Gastrocnemius medialis (tissue), 4 donors: ENCODE measurements at regions of chr10 and their contacts with region 1.

Region 1: GRCh38 chr10:68901104-68901927 is at the start of gene DDX50:
- DNase-seq: peak; percentile 98 to 99
- ATAC-seq: peak; percentile 99
- H3K4me3 ChIP-seq: peak within 1 kb of the TSS; percentile 92 to 98 (median 96)
- H3K27ac ChIP-seq: peak within 1 kb of the TSS; percentile 93 to 99 (median 98)
- H3K4me1 ChIP-seq: peaks cover 18 to 26% of the 10 kb centered on the region in 2 donors
- H3K27me3 ChIP-seq: no peaks in the 10 kb centered on the region
- CTCF ChIP-seq: peak in 4 of 5 experiments; percentile 13 to 37 (median 16)
- POLR2A ChIP-seq: peak; percentile 77 to 82
- total RNA-seq, gene DDX50: 17.2 to 25.9 (median 23.7) TPM

Region 2: GRCh38 chr10:68406815-68407548 is 494.3 kb before region 1 on chr10 and contains the start of gene RUFY2:
- in situ Hi-C with region 1: no loop called
- intact Hi-C with region 1: loop called (anchors 10 kb)
- DNase-seq: peak; percentile 32 to 58
- ATAC-seq: peak; percentile 92 to 96
- H3K4me3 ChIP-seq: peak within 1 kb of the TSS; percentile 83 to 100 (median 96)
- H3K27ac ChIP-seq: peak within 1 kb of the TSS; percentile 87 to 95 (median 92)
- H3K4me1 ChIP-seq: peaks cover 3 to 11% of the 10 kb centered on the region in 2 donors
- H3K27me3 ChIP-seq: no peaks in the 10 kb centered on the region
- CTCF ChIP-seq: peak; percentile 45 to 99 (median 95)
- POLR2A ChIP-seq: peak; percentile 60 to 69
- total RNA-seq, gene RUFY2: 8.9 to 15.7 (median 11.7) TPM

Region 3: GRCh38 chr10:68537796-68538195 is 363.5 kb before region 1 on chr10:
- in situ Hi-C with region 1: loop called (anchors 10 to 25 kb)
- intact Hi-C with region 1: no loop called
- DNase-seq: no peak
- ATAC-seq: no peak
- H3K4me3 ChIP-seq: no peak overlapping the region
- H3K27ac ChIP-seq: no peak overlapping the region
- H3K4me1 ChIP-seq: peaks cover 10 to 17% of the 10 kb centered on the region in 2 donors
- H3K27me3 ChIP-seq: no peaks in the 10 kb centered on the region
- CTCF ChIP-seq: no peak
- POLR2A ChIP-seq: no peak

Region 4: DNA sequence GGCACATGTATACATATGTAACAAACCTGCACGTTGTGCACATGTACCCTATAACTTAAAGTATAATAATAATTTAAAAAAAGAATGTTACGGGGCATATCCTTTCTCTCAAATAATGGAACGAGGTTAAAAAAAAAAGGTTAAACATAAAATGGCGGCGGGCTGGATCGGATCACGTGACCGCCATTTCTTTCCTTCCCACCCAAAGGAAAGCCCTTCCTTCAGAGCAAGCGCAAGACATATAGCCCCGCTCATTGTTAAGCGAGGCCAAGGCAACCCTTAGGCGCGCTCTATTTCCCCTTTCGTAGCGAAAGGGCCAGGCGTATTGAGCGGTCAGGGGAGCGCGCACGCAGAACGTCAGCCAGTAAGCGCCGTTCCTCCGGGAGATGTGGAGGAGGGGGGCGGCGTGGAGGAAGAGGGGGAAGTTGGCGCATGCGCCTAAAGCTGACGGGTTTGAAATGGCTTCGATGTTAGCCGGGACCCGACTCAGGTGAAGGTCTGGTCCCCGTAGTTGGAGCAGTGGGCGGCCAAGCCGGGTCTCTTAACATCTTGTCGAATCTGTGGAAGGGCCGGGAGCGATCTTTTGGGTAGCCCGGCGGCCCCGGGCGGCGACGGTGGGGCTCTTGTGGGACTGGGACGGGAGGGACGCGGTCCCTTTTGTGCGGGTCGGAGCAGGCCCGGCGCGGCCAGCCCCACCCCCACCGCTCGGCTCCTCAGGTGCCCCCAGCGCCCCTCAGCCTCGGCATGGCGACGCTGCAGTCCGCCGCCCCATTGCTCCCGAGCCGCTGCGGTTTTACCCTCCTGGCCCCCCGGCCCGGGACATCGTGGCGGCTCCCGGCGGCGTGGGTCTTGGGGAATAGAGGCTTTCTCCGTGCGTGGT is 180.3 kb before region 1 on chr10 and contains the start of gene CCAR1:
- in situ Hi-C with region 1: loop called in 1 of 4 experiments (anchors 25 kb)
- intact Hi-C with region 1: loop called (anchors 2 kb)
- DNase-seq: peak; percentile 93 to 95
- ATAC-seq: peak; percentile 97 to 98
- H3K4me3 ChIP-seq: peak within 1 kb of the TSS; percentile 88 to 96 (median 90)
- H3K27ac ChIP-seq: peak within 1 kb of the TSS; percentile 94 to 99 (median 96)
- H3K4me1 ChIP-seq: peaks cover 7 to 9% of the 10 kb centered on the region in 2 donors
- H3K27me3 ChIP-seq: no peaks in the 10 kb centered on the region
- CTCF ChIP-seq: no peak
- POLR2A ChIP-seq: peak; percentile 67 to 73
- total RNA-seq, gene CCAR1: 17.8 to 71.3 (median 37.7) TPM

Region 5: GRCh38 chr10:68756246-68756645 is 145.1 kb before region 1 on chr10:
- in situ Hi-C with region 1: no loop called
- intact Hi-C with region 1: no loop called
- DNase-seq: no peak
- ATAC-seq: no peak
- H3K4me3 ChIP-seq: no peak overlapping the region
- H3K27ac ChIP-seq: no peak overlapping the region
- H3K4me1 ChIP-seq: peaks cover 3 to 5% of the 10 kb centered on the region in 2 donors
- H3K27me3 ChIP-seq: no peaks in the 10 kb centered on the region
- CTCF ChIP-seq: no peak
- POLR2A ChIP-seq: no peak

Region 6: DNA sequence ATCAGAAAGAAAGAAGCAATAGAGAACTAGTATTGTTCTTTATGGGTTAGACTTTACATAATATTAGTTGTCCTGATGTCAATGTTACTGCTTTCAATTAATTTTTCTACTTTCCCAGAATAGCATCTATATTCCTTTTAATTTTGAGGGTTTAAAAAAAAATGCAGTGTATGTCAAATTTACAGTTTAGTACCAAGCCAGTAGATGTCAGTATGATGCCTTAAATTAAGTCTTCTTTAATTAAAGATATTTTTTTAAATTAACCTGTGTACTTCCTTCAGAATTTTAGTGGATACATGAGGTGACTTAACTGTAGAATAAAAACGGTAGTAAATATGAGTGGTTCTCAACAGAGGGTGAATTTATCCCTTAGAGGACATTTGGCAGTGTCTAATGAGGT is 109.2 kb before region 1 on chr10:
- in situ Hi-C with region 1: loop called in 1 of 4 experiments (anchors 10 kb)
- intact Hi-C with region 1: loop called (anchors 5 kb)
- DNase-seq: no peak
- ATAC-seq: no peak
- H3K4me3 ChIP-seq: no peak overlapping the region
- H3K27ac ChIP-seq: no peak overlapping the region
- H3K4me1 ChIP-seq: no peaks in the 10 kb centered on the region
- H3K27me3 ChIP-seq: no peaks in the 10 kb centered on the region
- CTCF ChIP-seq: peak in 1 of 5 experiments; percentile 22
- POLR2A ChIP-seq: no peak

Region 7: DNA sequence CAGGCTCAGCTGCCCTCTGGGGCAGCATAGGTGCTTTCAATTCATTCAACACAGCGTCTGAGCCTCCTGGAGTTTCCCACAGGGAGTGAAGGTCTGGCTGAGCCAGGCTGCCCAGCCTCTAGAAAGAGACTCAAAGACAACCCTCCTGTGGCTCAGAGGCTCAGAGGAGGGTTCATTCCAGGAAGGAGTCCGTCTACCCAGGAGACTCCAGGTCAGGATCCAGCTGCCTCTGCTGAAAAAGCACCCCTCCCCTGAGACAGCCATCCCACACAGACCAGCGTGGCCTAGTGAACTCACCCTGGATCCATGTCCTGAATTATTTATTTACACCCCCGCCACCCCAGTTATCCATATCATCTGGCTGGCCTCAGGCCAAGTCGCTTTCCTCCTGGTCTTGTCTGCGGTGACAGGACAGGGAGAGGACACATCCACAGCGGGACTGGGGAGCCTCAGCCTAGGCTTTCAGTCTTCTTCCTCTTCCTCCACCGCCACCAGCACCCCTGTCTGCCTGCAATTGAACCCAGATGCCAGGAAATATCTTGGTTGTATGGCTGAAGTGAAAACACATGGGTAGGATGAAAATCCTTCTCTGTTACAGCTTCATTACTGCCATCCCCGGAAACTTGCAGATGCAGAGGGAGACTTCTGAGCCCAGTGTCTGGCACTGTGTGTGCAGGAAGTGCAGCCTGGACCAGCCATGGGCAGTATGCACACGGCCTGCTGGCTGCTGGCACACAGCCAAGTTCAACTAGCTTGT is 856.4 kb after region 1 on chr10:
- in situ Hi-C with region 1: no loop called
- intact Hi-C with region 1: no loop called
- DNase-seq: no peak
- ATAC-seq: no peak
- H3K4me3 ChIP-seq: no peak overlapping the region
- H3K27ac ChIP-seq: no peak overlapping the region
- H3K4me1 ChIP-seq: no peaks in the 10 kb centered on the region
- H3K27me3 ChIP-seq: no peaks in the 10 kb centered on the region
- CTCF ChIP-seq: no peak
- POLR2A ChIP-seq: no peak